ENCODE measurements at regions of chr10 and their contacts with region 1.

Region 1: GRCh38 chr10:3107426-3107961 is 40.1 kb downstream of the PFKP start:
- DNase-seq: peak; percentile 94
- H3K4me3 Mint-ChIP-seq: peak overlapping the region; percentile 63
- H3K27ac Mint-ChIP-seq: peak overlapping the region; percentile 93
- H3K4me1 Mint-ChIP-seq: peaks cover 27% of the 10 kb centered on the region
- H3K27me3 Mint-ChIP-seq: no peaks in the 10 kb centered on the region
- CTCF ChIP-seq: no peak

Region 2: DNA sequence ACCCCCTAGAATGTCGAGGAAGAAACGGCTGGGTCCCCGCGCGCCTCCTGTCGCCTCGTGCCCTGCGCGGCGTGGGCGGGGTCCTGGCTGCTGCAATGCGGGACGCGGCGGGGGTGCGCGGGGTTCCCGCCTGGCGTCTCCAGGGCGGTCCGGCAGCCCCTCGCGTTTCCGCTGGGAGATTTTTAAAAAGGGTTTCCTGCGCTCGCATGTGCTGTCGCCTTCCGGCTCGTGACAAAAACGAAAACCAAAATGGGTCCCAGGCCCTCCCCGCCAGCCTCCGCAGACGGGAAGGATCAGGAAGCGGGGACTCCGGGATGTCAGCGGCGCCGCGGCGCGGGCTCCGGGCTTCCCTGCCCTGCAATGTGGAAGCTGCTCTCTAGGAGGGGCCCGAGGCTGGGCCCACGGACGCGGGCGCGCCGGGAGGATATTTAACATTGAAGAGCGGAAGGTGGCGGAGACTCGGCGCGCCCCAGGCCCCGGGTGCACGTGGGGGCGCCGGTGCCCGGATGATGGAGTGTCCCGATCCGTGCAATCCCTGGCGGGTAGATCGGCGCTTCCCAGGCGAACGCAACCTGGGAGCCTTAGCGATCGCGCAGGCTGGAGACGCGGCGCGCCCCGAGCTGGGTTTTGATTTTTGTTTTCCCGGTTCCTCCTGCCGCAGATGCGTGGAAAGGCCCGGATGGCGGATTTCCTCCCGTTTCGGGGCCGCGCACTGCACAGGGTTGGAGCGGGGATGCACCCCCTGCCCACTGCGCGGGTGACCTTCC is 39.1 kb before region 1 on chr10:
- CTCF ChIA-PET with region 1: interaction called, 4 read pairs
- POLR2A ChIA-PET with region 1: interaction called, 22 read pairs
- intact Hi-C with region 1: loop called (anchors 1 kb)
- DNase-seq: peak; percentile 50
- H3K4me3 Mint-ChIP-seq: peak overlapping the region; percentile 91
- H3K27ac Mint-ChIP-seq: peak overlapping the region; percentile 39
- H3K4me1 Mint-ChIP-seq: peaks cover 25% of the 10 kb centered on the region
- H3K27me3 Mint-ChIP-seq: no peaks in the 10 kb centered on the region
- CTCF ChIP-seq: peak; percentile 14

Region 3: GRCh38 chr10:3095373-3096139 is 11.9 kb before region 1 on chr10:
- CTCF ChIA-PET with region 1: interaction called, 6 read pairs
- POLR2A ChIA-PET with region 1: interaction called, 104 read pairs
- intact Hi-C with region 1: no loop called
- DNase-seq: peak; percentile 97
- H3K4me3 Mint-ChIP-seq: peak overlapping the region; percentile 56
- H3K27ac Mint-ChIP-seq: peak overlapping the region; percentile 93
- H3K4me1 Mint-ChIP-seq: peaks cover 52% of the 10 kb centered on the region
- H3K27me3 Mint-ChIP-seq: no peaks in the 10 kb centered on the region
- CTCF ChIP-seq: no peak

Region 4: DNA sequence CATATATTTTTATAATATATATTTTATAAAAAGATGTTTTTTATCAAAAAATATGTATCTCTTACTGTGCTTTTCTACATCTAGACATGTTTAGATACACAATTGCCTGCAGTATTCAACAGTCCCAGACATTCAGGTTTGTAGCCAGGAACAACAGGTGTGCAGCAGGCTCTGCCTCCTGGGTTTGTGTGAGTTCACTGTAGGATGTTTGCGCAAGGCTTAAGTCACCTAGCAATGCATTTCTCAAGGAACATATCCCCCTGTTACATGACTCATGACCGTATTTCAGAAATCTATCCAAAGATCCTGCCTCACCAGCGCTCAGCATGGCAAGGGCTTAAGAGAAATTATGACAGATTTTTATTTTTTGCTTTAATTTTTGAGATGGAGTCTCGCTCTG is 23.6 kb after region 1 on chr10:
- CTCF ChIA-PET with region 1: no interaction called
- POLR2A ChIA-PET with region 1: interaction called, 12 read pairs
- intact Hi-C with region 1: no loop called
- DNase-seq: peak; percentile 94
- H3K4me3 Mint-ChIP-seq: no peak overlapping the region
- H3K27ac Mint-ChIP-seq: peak overlapping the region; percentile 82
- H3K4me1 Mint-ChIP-seq: peaks cover 18% of the 10 kb centered on the region
- H3K27me3 Mint-ChIP-seq: no peaks in the 10 kb centered on the region
- CTCF ChIP-seq: no peak

Region 5: DNA sequence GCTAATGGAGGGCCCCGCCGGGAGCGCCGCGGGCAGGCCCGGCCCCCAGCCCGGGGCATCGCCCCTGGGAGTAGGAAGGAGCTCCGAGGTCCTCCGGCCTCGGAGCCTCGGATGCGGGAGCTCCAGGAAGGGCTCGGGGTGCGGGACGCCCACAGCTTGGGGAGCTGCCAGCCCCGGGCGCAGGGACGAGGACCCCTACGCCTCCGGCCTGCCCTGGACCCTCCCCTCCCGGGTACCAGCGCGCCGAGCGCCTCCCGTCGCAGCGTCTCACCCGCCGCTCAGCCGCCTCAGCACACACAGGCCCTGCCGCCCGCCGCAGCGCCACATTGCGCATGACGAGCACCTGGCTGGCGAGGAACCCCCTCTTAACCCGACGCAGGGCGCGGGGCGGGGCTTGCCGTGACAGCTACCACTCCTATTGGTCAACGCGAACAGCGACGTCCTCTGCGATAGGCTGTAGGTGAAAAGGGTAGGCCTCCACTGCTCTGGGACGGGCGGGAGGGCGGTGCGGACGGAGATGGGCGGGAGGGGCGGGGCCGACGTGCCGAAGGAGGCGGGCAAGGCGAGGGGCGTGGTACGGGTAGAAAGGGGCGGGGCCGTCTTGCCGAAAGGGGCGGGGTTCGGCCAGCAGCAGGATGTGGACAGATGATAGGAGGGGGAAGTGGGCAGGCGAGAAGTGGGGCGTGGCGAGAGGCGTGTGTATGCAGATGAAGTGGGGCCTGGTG is 65.1 kb after region 1 on chr10 and contains the start of gene PITRM1:
- CTCF ChIA-PET with region 1: no interaction called
- POLR2A ChIA-PET with region 1: interaction called, 13 read pairs
- intact Hi-C with region 1: no loop called
- DNase-seq: peak; percentile 99
- H3K4me3 Mint-ChIP-seq: peak within 1 kb of the TSS; percentile 78
- H3K27ac Mint-ChIP-seq: peak within 1 kb of the TSS; percentile 55
- H3K4me1 Mint-ChIP-seq: peaks cover 17% of the 10 kb centered on the region
- H3K27me3 Mint-ChIP-seq: no peaks in the 10 kb centered on the region
- CTCF ChIP-seq: no peak
- total RNA-seq, gene PITRM1: 132 and 136 TPM in 2 replicates

Measured in MCF 10A (cell line).